Aorta (tissue), 5 donors: ENCODE measurements at regions of chrX and their contacts with region 1.

Region 1: GRCh38 chrX:128685387-128685786 is 633.2 kb upstream of the ACTRT1 start:
- DNase-seq: no peak
- ATAC-seq: no peak
- H3K4me3 ChIP-seq: no peak overlapping the region
- H3K27ac ChIP-seq: no peak overlapping the region
- H3K4me1 ChIP-seq: no peaks in the 10 kb centered on the region
- H3K27me3 ChIP-seq: no peaks in the 10 kb centered on the region

Region 2: GRCh38 chrX:128622296-128622695 is 63.1 kb before region 1 on chrX:
- intact Hi-C with region 1: loop called in 1 of 2 experiments (anchors 10 kb)
- DNase-seq: no peak
- ATAC-seq: no peak
- H3K4me3 ChIP-seq: no peak overlapping the region
- H3K27ac ChIP-seq: no peak overlapping the region
- H3K4me1 ChIP-seq: no peaks in the 10 kb centered on the region
- H3K27me3 ChIP-seq: no peaks in the 10 kb centered on the region

Region 3: DNA sequence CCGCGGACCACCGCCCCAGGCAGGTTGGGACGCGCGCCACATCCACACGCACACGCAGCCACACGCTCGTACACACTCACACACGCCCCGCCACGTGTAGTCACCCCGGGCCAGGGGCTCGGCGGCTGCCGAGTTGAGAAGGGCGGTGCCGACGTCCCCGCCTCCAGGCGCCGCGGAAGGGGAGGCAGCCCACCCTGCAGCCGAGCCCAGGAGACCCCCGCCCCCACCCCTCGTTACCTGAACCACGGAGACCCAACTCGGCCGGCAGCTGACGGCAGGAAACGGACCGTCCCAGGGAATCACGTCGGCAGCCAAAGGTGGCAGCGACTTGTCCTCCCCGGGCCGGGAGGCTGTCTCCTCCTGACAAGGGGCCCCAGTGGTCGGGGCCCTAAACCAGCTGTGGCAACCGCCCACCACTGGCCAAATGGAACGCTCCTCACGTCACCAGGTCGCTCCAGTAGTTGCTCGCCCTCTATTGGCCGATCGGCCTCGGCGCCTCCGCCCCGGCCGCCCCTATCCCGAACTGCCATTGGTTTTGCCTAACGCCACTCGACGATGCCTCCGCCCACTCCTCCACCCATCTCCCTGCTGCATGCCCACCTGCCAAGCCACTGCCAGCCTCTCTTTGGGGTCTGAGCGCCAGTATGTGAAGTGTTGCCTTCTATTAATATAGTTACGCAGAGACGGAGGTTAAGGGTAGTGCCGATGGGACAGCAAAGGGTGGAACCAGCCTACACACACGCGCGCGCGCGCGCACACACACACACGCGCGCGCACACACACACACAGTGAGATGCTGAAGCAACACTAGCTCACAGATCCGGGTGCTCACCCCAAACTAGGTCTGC is 1158.3 kb after region 1 on chrX and contains the start of gene ZDHHC9:
- intact Hi-C with region 1: no loop called
- DNase-seq: peak; percentile 91 to 95
- ATAC-seq: peak; percentile 94
- H3K4me3 ChIP-seq: peak within 1 kb of the TSS; percentile 49 to 59
- H3K27ac ChIP-seq: peak within 1 kb of the TSS in 1 of 2 donors; percentile 77
- H3K4me1 ChIP-seq: no peaks in the 10 kb centered on the region
- H3K27me3 ChIP-seq: no peaks in the 10 kb centered on the region
- total RNA-seq, gene ZDHHC9: 21.3 to 24.0 TPM